B cell (primary cell): ENCODE measurements at regions of chr3 and their contacts with region 1.

Region 1: DNA sequence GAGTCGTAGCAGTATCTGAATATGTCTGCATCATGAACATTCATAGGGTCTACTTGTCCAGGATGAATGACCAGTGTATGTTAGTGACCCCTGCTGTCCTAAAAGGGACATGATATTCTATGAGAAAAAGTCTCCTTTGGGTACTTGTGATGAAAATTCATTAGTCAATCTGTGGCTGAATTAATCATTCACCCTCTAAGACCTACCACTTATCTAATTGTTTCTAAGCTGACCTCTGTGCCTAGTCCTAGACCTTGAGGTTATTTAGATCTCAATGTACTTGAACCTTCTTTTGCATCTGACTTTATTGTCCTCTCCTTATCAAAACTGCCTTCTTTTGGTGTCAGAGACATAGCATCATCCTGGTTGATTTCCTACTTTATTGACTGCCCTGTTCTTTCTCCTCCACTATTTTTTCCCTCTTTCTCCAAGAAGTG is 799.3 kb downstream of the DIPK2A start:
- DNase-seq: peak; percentile 3
- ATAC-seq: no peak
- H3K4me3 ChIP-seq: no peak overlapping the region
- H3K4me3 Mint-ChIP-seq: no peak overlapping the region
- H3K27ac ChIP-seq: no peak overlapping the region
- H3K27ac Mint-ChIP-seq: no peak overlapping the region
- H3K4me1 ChIP-seq: no peaks in the 10 kb centered on the region
- H3K4me1 Mint-ChIP-seq: no peaks in the 10 kb centered on the region
- H3K27me3 ChIP-seq: no peaks in the 10 kb centered on the region
- H3K27me3 Mint-ChIP-seq: no peaks in the 10 kb centered on the region
- CTCF ChIP-seq: no peak

Region 2: GRCh38 chr3:143775459-143775858 is 995.5 kb before region 1 on chr3:
- CTCF ChIA-PET with region 1: no interaction called
- POLR2A ChIA-PET with region 1: no interaction called
- intact Hi-C with region 1: loop called (anchors 10 kb)
- DNase-seq: peak; percentile 47
- ATAC-seq: peak; percentile 72
- H3K4me3 ChIP-seq: no peak overlapping the region
- H3K4me3 Mint-ChIP-seq: no peak overlapping the region
- H3K27ac ChIP-seq: no peak overlapping the region
- H3K27ac Mint-ChIP-seq: no peak overlapping the region
- H3K4me1 ChIP-seq: peaks cover 0 to 5% of the 10 kb centered on the region in 2 donors
- H3K4me1 Mint-ChIP-seq: peaks cover 4% of the 10 kb centered on the region
- H3K27me3 ChIP-seq: no peaks in the 10 kb centered on the region
- H3K27me3 Mint-ChIP-seq: no peaks in the 10 kb centered on the region
- CTCF ChIP-seq: peak; percentile 71

Region 3: GRCh38 chr3:143885780-143886427 is 885.0 kb before region 1 on chr3:
- CTCF ChIA-PET with region 1: no interaction called
- POLR2A ChIA-PET with region 1: no interaction called
- intact Hi-C with region 1: loop called (anchors 5 kb)
- DNase-seq: peak; percentile 61
- ATAC-seq: peak; percentile 80
- H3K4me3 ChIP-seq: no peak overlapping the region
- H3K4me3 Mint-ChIP-seq: no peak overlapping the region
- H3K27ac ChIP-seq: no peak overlapping the region
- H3K27ac Mint-ChIP-seq: no peak overlapping the region
- H3K4me1 ChIP-seq: no peaks in the 10 kb centered on the region
- H3K4me1 Mint-ChIP-seq: no peaks in the 10 kb centered on the region
- H3K27me3 ChIP-seq: peaks cover 0 to 2% (median 0%) of the 10 kb centered on the region in 4 experiments
- H3K27me3 Mint-ChIP-seq: no peaks in the 10 kb centered on the region
- CTCF ChIP-seq: peak; percentile 88